Endothelial cell of umbilical vein (primary cell): ENCODE measurements at regions of chr15 and their contacts with region 1.

Region 1: GRCh38 chr15:58957101-58957973 is 23.9 kb upstream of the SLTM start:
- DNase-seq: peak; percentile 65
- H3K4me3 ChIP-seq: no peak overlapping the region
- H3K27ac ChIP-seq: no peak overlapping the region
- H3K4me1 ChIP-seq: peaks cover 5% of the 10 kb centered on the region
- H3K27me3 ChIP-seq: no peaks in the 10 kb centered on the region
- CTCF ChIP-seq: peak; percentile 76 to 83
- POLR2A ChIP-seq: no peak

Region 2: DNA sequence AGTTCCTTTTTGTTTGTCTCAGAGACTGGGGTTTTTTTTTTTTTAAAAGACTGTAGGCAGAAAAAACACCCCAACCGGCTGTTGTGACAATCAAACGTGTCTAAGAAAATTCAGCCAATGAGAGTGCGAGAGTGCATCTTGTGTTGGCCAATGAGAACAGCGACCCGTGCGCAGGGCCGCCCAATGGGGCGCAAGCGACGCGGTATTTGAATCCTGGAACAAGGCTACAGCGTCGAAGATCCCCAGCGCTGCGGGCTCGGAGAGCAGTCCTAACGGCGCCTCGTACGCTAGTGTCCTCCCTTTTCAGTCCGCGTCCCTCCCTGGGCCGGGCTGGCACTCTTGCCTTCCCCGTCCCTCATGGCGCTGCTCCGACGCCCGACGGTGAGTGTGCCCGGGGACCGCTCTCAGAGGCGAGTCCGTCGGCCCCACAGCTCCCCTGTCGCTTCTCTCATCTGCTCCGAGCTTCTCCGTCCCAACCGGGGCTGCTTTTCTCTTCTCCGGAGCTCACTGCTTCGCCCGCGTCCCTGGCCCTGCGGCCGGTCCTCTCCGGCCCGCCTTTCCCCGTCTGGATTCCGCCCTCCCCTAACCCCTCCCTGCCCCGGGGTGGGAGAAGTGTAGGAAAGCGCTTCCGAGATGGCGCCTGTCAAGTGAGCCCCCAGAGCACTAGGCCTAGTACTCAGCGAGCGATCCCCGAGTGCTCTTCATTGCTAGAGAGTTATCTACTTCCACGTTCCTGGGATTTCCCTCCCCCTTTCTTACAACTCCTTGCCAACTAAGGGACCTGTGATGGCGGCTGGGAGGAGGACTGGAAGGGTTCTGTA is 147.8 kb after region 1 on chr15 and contains the start of gene CCNB2:
- CTCF ChIA-PET with region 1: no interaction called
- POLR2A ChIA-PET with region 1: interaction called, 4 read pairs
- dilution Hi-C with region 1: no loop called
- intact Hi-C with region 1: loop called (anchors 10 kb)
- DNase-seq: peak; percentile 93
- H3K4me3 ChIP-seq: peak within 1 kb of the TSS; percentile 68 to 95 (median 68)
- H3K27ac ChIP-seq: peak within 1 kb of the TSS; percentile 57
- H3K4me1 ChIP-seq: peaks cover 11% of the 10 kb centered on the region
- H3K27me3 ChIP-seq: no peaks in the 10 kb centered on the region
- CTCF ChIP-seq: no peak
- POLR2A ChIP-seq: peak; percentile 83
- total RNA-seq, gene CCNB2: 62.8 and 65.2 TPM in 2 replicates

Region 3: DNA sequence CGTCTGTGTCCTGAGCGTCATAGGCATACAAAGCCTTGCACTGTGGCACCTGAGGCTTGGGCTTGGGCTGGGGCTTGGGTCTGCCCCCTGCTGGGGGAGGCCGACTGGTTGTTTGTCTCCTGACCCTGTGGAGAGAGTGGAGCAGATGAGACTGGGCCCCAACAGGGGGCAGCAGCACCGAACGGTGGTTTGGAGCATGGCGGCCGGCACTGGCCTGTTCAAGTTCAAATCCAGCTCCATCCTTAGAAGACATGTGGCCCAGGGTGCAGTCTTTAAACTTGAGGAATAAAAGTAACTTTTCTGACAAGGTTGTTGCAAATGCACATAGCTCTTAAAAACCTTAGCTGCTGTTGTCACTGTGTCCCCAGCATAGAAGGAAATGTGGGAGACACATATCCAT is 180.9 kb after region 1 on chr15:
- CTCF ChIA-PET with region 1: interaction called, 4 read pairs
- POLR2A ChIA-PET with region 1: no interaction called
- dilution Hi-C with region 1: no loop called
- intact Hi-C with region 1: loop called (anchors 1 kb)
- DNase-seq: peak; percentile 64
- H3K4me3 ChIP-seq: no peak overlapping the region
- H3K27ac ChIP-seq: no peak overlapping the region
- H3K4me1 ChIP-seq: no peaks in the 10 kb centered on the region
- H3K27me3 ChIP-seq: no peaks in the 10 kb centered on the region
- CTCF ChIP-seq: peak; percentile 86 to 91
- POLR2A ChIP-seq: no peak

Region 4: GRCh38 chr15:59492389-59493377 is 535.3 kb after region 1 on chr15:
- CTCF ChIA-PET with region 1: interaction called, 12 read pairs
- POLR2A ChIA-PET with region 1: no interaction called
- dilution Hi-C with region 1: no loop called
- intact Hi-C with region 1: loop called (anchors 1 kb)
- DNase-seq: peak; percentile 73
- H3K4me3 ChIP-seq: no peak overlapping the region
- H3K27ac ChIP-seq: no peak overlapping the region
- H3K4me1 ChIP-seq: no peaks in the 10 kb centered on the region
- H3K27me3 ChIP-seq: no peaks in the 10 kb centered on the region
- CTCF ChIP-seq: peak; percentile 68 to 86
- POLR2A ChIP-seq: no peak

Region 5: GRCh38 chr15:59501597-59501996 is 544.3 kb after region 1 on chr15:
- CTCF ChIA-PET with region 1: interaction called, 12 read pairs
- POLR2A ChIA-PET with region 1: no interaction called
- dilution Hi-C with region 1: no loop called
- intact Hi-C with region 1: no loop called
- DNase-seq: peak; percentile 72
- H3K4me3 ChIP-seq: no peak overlapping the region
- H3K27ac ChIP-seq: no peak overlapping the region
- H3K4me1 ChIP-seq: no peaks in the 10 kb centered on the region
- H3K27me3 ChIP-seq: peaks cover 4 to 6% of the 10 kb centered on the region in 2 experiments
- CTCF ChIP-seq: peak; percentile 54 to 66
- POLR2A ChIP-seq: no peak